Tibial artery (tissue), 4 donors: ENCODE measurements at regions of chr15 and their contacts with region 1.

Region 1: DNA sequence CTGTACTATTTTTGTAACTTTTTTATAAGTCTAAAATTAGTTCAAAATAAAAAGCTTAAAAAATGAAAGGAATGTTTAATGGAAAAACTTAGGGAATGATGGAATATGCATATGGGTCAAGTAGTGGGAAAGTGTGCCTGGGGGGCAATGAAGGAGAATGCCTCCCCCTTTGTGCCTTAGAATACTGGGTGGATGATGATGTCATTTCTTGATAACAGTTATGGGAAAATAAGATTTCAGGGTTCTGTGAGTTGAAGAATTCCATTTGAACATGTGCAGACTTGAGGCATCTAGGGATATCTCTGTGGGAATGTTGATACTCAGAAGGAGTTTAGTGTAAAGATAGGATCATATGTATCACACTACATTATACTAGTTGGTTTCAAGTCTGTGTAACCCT is 13.8 kb downstream of the WDR93 start:
- DNase-seq: no peak
- H3K4me3 ChIP-seq: no peak overlapping the region
- H3K27ac ChIP-seq: no peak overlapping the region
- H3K4me1 ChIP-seq: peaks cover 0 to 16% (median 3%) of the 10 kb centered on the region in 4 donors
- H3K27me3 ChIP-seq: peaks cover 0 to 3% of the 10 kb centered on the region in 2 donors
- CTCF ChIP-seq: no peak

Region 2: DNA sequence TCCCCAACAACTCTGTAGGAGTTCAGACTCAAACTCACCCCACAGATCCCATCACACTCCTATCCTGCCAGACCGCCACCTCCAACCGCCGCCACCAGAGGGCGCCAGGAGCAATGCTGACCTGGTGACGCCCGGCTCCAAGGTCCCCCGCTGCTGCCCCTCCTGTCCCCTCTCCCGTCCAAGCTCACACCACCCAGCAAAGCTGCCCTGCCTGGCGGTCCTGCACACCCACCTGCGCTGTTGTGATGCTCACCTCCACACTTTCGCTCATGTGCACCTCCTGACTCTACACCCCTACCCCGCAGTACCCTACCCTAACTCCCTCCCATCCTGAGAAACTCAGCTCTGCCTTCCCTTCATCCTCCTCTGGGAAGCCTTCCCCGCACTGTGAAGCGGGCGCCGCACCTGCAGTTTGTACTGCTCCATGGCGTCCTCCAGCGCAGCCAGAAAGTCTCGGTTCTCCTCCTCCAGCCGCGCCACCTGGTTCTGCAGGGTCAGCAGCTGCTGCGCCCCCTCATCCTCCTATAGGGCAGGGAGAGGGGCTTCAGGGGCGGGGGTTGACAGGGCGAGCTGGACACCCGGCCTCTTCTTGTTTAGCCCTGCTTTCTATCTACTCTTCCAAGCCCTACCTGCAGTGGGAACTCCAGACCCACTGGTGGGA is 57.1 kb before region 1 on chr15:
- intact Hi-C with region 1: loop called (anchors 10 kb)
- DNase-seq: peak; percentile 86
- H3K4me3 ChIP-seq: no peak overlapping the region
- H3K27ac ChIP-seq: no peak overlapping the region
- H3K4me1 ChIP-seq: peaks cover 0 to 6% (median 0%) of the 10 kb centered on the region in 4 donors
- H3K27me3 ChIP-seq: no peaks in the 10 kb centered on the region
- CTCF ChIP-seq: peak; percentile 88 to 93